Activated CD4-positive, alpha-beta memory T cell treated with anti-CD3 and anti-CD28 coated beads for 36 hours (primary cell): ENCODE measurements at regions of chr7 and their contacts with region 1.

Region 1: DNA sequence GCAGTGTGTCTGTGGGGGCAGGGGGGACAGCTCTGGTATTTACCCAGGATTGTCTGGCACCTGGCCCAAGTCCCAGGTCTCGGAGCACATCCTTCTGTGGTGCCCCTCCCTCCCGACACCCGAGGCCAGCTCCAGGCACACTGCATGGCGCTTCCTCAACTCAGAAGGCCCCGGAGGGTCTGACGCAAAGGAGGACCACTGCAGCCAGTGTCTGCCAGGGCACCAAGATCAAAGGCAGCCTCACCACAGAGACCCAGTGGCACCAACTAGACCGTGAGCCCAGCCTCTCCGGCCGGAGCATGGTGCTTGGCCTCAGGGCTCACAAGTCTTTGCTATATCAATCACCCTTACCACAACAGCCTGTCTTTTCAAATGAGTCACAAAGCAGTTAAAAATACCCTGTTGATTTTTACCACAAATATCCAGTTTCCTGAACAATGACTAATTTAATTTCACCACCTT is 99.3 kb upstream of the DDC start:
- DNase-seq: peak; percentile 60
- H3K4me3 Mint-ChIP-seq: no peak overlapping the region
- H3K27ac Mint-ChIP-seq: no peak overlapping the region
- H3K4me1 Mint-ChIP-seq: peaks cover 66% of the 10 kb centered on the region
- H3K27me3 Mint-ChIP-seq: peaks cover 2% of the 10 kb centered on the region

Region 2: DNA sequence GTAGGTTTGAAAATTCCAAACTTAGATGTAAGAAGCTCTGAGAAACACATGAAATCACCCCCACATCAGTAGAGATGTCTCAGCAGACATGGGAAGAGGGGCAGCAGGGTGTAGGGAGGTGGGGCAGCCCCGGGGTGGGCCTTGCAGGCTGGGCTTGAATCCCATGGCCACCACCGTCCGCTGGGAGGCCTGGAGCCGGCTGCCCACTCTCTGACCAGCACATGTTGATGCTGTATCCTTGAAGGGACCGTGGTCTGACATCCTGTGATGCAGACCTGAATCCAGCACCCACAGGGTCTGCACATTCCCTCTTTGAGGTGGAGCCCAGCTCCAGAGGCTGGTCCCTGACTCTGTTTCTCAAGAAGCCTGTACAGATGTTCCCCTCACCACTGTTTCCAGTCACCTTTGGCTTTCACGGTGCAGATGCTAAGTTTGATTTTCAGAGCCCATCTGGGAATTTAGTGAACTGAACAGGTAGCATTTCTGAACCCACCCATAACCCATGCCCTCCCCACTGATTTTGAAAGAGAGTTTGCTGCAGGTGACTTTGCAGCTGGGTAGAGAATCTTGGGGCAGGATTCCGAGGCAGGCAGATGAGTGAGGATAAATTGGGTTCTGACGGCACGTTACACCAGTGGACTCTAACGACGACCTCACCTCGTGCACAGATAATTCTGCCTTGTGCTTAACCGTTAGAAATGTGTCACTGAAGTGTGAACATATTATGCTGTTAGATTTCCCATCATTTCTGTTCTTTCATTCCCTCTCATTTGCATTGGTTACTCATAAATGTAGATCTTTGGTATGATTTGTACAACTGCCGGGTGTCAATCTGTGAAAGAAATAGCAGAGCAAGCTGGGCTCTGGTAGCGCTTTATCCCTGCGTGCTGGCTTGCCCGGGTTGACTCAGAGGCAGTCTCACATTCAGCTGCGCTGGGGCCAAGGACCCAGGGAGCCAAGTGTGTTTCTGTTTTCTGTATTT is 314.2 kb before region 1 on chr7:
- CTCF ChIA-PET with region 1: no interaction called
- POLR2A ChIA-PET with region 1: no interaction called
- intact Hi-C with region 1: loop called (anchors 10 kb)
- DNase-seq: peak; percentile 94
- H3K4me3 Mint-ChIP-seq: peak overlapping the region; percentile 14
- H3K27ac Mint-ChIP-seq: peak overlapping the region; percentile 92
- H3K4me1 Mint-ChIP-seq: peaks cover 98% of the 10 kb centered on the region
- H3K27me3 Mint-ChIP-seq: no peaks in the 10 kb centered on the region

Region 3: GRCh38 chr7:50534690-50535290 is 129.7 kb before region 1 on chr7:
- CTCF ChIA-PET with region 1: no interaction called
- POLR2A ChIA-PET with region 1: no interaction called
- intact Hi-C with region 1: loop called (anchors 1 kb)
- DNase-seq: peak; percentile 33
- H3K4me3 Mint-ChIP-seq: no peak overlapping the region
- H3K27ac Mint-ChIP-seq: no peak overlapping the region
- H3K4me1 Mint-ChIP-seq: peaks cover 27% of the 10 kb centered on the region
- H3K27me3 Mint-ChIP-seq: peaks cover 7% of the 10 kb centered on the region

Region 4: GRCh38 chr7:50610521-50611277 is 53.8 kb before region 1 on chr7:
- CTCF ChIA-PET with region 1: no interaction called
- POLR2A ChIA-PET with region 1: no interaction called
- intact Hi-C with region 1: loop called (anchors 5 kb)
- DNase-seq: peak; percentile 71
- H3K4me3 Mint-ChIP-seq: no peak overlapping the region
- H3K27ac Mint-ChIP-seq: no peak overlapping the region
- H3K4me1 Mint-ChIP-seq: peaks cover 30% of the 10 kb centered on the region
- H3K27me3 Mint-ChIP-seq: no peaks in the 10 kb centered on the region

Region 5: GRCh38 chr7:50739744-50740435 is 75.4 kb after region 1 on chr7:
- CTCF ChIA-PET with region 1: no interaction called
- POLR2A ChIA-PET with region 1: no interaction called
- intact Hi-C with region 1: loop called (anchors 2 kb)
- DNase-seq: peak; percentile 80
- H3K4me3 Mint-ChIP-seq: peak overlapping the region; percentile 62
- H3K27ac Mint-ChIP-seq: peak overlapping the region; percentile 68
- H3K4me1 Mint-ChIP-seq: peaks cover 27% of the 10 kb centered on the region
- H3K27me3 Mint-ChIP-seq: no peaks in the 10 kb centered on the region